ENCODE measurements at regions of chr16 and their contacts with region 1.

Region 1: GRCh38 chr16:68884401-68884800 is 41.1 kb downstream of the TANGO6 start:
- DNase-seq: no peak
- ATAC-seq: no peak
- H3K4me3 ChIP-seq: no peak overlapping the region
- H3K27ac ChIP-seq: no peak overlapping the region
- H3K4me1 ChIP-seq: no peaks in the 10 kb centered on the region
- H3K27me3 ChIP-seq: no peaks in the 10 kb centered on the region
- CTCF ChIP-seq: no peak

Region 2: DNA sequence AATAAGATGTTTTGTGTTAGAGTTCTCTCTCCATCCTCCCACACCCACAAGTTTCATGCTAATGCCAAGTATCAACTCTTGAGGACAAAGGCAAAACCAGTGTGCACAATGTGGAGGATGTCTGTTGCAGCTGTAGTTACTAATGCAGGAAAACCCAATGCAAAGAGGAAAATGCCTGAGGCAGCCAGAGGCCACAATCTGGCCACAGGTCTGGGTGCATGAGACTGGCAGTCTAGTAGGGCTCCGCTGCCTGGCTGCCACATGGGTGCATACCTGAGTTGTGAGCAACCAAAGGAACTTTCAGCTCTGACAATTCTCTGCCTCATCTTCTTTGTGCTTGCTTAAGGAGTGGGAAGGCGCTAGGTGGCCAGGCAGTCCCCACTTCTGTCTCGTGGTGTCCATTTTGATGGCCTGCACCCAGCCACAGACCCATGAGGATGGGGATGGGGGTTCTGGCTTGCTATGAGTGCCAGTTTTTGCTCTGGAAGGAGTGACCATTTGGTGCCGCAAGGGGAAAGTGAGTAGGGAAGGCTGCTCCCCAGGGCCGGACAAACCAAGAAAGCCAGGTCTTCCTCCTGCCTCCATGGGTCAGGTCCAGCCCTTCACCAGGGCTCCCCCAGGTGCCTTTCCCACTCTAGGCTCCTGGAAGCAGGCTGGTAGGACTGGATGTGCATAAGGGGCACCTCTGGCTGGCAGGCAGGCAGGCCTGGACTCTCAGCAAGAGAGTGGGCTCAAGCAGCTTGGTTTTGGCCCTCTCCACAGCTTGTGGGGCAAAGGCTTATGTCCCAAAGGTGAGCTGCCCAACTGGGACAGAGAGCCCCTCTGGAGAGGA is 1161.0 kb before region 1 on chr16:
- CTCF ChIA-PET with region 1: no interaction called
- POLR2A ChIA-PET with region 1: no interaction called
- in situ Hi-C with region 1: no loop called
- intact Hi-C with region 1: no loop called
- DNase-seq: no peak
- ATAC-seq: no peak
- H3K4me3 ChIP-seq: no peak overlapping the region
- H3K27ac ChIP-seq: no peak overlapping the region
- H3K4me1 ChIP-seq: peaks cover 6% of the 10 kb centered on the region
- H3K27me3 ChIP-seq: no peaks in the 10 kb centered on the region
- CTCF ChIP-seq: no peak

Region 3: DNA sequence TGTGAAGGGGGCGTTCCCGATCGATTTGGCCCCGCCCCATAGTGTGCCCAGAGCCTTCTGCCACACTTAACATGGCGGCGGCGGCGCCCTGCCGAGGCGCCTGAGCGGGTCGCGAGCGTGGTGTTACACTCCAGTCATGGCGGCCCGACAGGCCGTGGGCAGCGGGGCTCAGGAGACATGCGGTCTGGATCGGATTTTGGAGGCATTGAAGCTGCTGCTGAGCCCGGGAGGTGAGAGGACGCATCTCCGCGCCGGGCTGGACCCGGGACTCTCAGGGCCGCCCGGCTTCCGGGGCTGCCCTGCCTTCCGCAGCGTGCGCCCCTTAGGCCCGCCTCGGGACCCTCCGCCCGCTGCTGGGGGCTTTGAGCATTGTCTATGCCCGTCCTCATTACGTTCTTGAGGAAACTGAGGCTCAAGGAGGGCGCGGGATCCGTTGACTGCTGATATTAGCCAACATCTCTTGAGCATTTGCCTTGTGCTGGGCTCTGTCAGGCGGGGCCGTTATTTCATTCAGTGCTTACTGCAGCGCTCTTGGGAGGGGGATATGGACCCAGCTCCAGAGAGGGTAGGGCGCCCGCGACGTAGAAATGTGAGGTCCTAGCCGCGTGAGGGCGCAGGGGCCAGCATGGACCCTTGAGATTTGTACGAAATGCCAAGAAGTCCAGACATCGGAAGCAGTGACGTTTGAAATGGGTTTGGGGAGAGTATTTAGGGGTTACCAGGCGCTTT is 40.8 kb before region 1 on chr16 and contains the start of gene TANGO6:
- CTCF ChIA-PET with region 1: no interaction called
- POLR2A ChIA-PET with region 1: no interaction called
- in situ Hi-C with region 1: no loop called
- intact Hi-C with region 1: no loop called
- DNase-seq: peak; percentile 12
- ATAC-seq: peak; percentile 97
- H3K4me3 ChIP-seq: peak within 1 kb of the TSS; percentile 83 to 87
- H3K27ac ChIP-seq: peak within 1 kb of the TSS; percentile 90
- H3K4me1 ChIP-seq: peaks cover 4% of the 10 kb centered on the region
- H3K27me3 ChIP-seq: no peaks in the 10 kb centered on the region
- CTCF ChIP-seq: no peak; the same call in 1 of the 2 replicates
- total RNA-seq, gene TANGO6: 11.0 TPM

Region 4: DNA sequence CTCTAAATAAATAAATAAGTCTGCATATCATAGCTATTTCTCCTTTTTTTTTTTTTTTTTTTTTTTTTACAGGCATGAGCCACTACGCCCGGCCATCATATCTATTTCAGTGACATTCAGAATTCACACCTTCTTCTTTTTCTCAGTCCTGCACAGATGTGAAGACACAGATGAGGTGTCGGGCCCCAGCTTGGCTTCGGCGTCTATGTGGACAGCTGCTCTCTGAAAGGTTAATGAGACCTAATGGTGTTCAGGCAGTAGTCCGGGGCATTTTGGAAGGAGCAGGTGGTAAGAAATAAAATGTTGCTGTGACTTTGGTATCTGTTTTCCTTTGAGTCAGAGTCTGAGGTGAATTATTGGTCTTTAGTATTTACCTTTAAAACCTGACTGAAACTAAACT is 17.5 kb before region 1 on chr16:
- CTCF ChIA-PET with region 1: no interaction called
- POLR2A ChIA-PET with region 1: no interaction called
- in situ Hi-C with region 1: no loop called
- intact Hi-C with region 1: no loop called
- DNase-seq: no peak
- ATAC-seq: no peak
- H3K4me3 ChIP-seq: no peak overlapping the region
- H3K27ac ChIP-seq: no peak overlapping the region
- H3K4me1 ChIP-seq: no peaks in the 10 kb centered on the region
- H3K27me3 ChIP-seq: no peaks in the 10 kb centered on the region
- CTCF ChIP-seq: no peak

Region 5: GRCh38 chr16:68951991-68952877 is 67.8 kb after region 1 on chr16:
- CTCF ChIA-PET with region 1: no interaction called
- POLR2A ChIA-PET with region 1: interaction called, 11 read pairs
- in situ Hi-C with region 1: no loop called
- intact Hi-C with region 1: no loop called
- DNase-seq: no peak
- ATAC-seq: no peak
- H3K4me3 ChIP-seq: no peak overlapping the region
- H3K27ac ChIP-seq: no peak overlapping the region
- H3K4me1 ChIP-seq: no peaks in the 10 kb centered on the region; the same call in 1 of the 2 replicates
- H3K27me3 ChIP-seq: no peaks in the 10 kb centered on the region
- CTCF ChIP-seq: no peak

Measured in Panc1 (cell line).